Activated CD4-positive, alpha-beta memory T cell treated with anti-CD3 and anti-CD28 coated beads for 36 hours (primary cell): ENCODE measurements at regions of chrX and their contacts with region 1.

Region 1: GRCh38 chrX:14029425-14030173 is at the start of gene GEMIN8:
- DNase-seq: peak; percentile 90
- H3K4me3 Mint-ChIP-seq: peak within 1 kb of the TSS; percentile 94
- H3K27ac Mint-ChIP-seq: peak within 1 kb of the TSS; percentile 94
- H3K4me1 Mint-ChIP-seq: peaks cover 25% of the 10 kb centered on the region
- H3K27me3 Mint-ChIP-seq: no peaks in the 10 kb centered on the region
- total RNA-seq, gene GEMIN8: 8.5 to 10.6 TPM

Region 2: DNA sequence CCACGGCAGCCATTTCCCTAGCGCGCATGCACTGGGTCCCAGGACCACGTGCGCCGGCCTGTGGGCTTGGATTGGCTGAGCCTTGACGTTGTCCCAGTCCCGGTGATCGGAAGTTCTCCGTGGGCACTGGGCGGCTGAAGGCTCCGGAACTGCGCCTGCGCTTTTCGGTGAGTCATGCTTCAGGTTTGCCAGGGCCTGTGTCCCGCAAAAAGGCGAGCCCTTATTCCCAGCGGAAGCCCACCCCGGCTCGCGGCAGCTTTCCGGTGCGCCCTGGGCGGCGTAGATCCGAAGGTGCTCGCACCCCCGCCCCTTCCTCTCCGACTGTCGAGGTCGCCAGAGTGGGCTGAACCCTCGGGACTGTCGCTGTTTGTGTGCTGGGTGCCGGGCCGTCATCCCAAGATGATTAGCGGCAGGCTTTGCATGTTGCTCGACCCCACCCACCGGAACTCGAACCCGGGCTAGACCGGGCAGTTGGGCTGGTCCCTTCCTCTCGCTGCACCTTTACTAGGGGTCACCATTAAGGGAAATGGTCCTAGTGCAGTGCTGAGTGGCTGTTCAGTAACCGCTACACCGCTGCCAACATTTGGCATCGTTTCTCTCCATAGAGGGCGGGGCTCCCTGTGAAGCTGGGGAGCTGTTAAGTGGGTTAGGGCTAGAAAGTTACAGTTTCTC is 376.4 kb before region 1 on chrX and contains the start of gene TCEANC:
- CTCF ChIA-PET with region 1: interaction called, 6 read pairs
- POLR2A ChIA-PET with region 1: no interaction called
- intact Hi-C with region 1: loop called (anchors 1 kb)
- DNase-seq: peak; percentile 96
- H3K4me3 Mint-ChIP-seq: peak within 1 kb of the TSS; percentile 84
- H3K27ac Mint-ChIP-seq: peak within 1 kb of the TSS; percentile 93
- H3K4me1 Mint-ChIP-seq: peaks cover 22% of the 10 kb centered on the region
- H3K27me3 Mint-ChIP-seq: no peaks in the 10 kb centered on the region
- total RNA-seq, gene TCEANC: 1.9 TPM

Region 3: GRCh38 chrX:13700380-13700779 is 329.2 kb before region 1 on chrX:
- CTCF ChIA-PET with region 1: no interaction called
- POLR2A ChIA-PET with region 1: no interaction called
- intact Hi-C with region 1: no loop called
- DNase-seq: no peak
- H3K4me3 Mint-ChIP-seq: no peak overlapping the region
- H3K27ac Mint-ChIP-seq: no peak overlapping the region
- H3K4me1 Mint-ChIP-seq: peaks cover 53% of the 10 kb centered on the region
- H3K27me3 Mint-ChIP-seq: no peaks in the 10 kb centered on the region

Region 4: GRCh38 chrX:13742397-13743176 is 287.0 kb before region 1 on chrX:
- CTCF ChIA-PET with region 1: interaction called, 6 read pairs
- POLR2A ChIA-PET with region 1: no interaction called
- intact Hi-C with region 1: loop called (anchors 1 kb)
- DNase-seq: peak; percentile 71
- H3K4me3 Mint-ChIP-seq: peak overlapping the region; percentile 60
- H3K27ac Mint-ChIP-seq: peak overlapping the region; percentile 80
- H3K4me1 Mint-ChIP-seq: peaks cover 20% of the 10 kb centered on the region
- H3K27me3 Mint-ChIP-seq: no peaks in the 10 kb centered on the region

Region 5: DNA sequence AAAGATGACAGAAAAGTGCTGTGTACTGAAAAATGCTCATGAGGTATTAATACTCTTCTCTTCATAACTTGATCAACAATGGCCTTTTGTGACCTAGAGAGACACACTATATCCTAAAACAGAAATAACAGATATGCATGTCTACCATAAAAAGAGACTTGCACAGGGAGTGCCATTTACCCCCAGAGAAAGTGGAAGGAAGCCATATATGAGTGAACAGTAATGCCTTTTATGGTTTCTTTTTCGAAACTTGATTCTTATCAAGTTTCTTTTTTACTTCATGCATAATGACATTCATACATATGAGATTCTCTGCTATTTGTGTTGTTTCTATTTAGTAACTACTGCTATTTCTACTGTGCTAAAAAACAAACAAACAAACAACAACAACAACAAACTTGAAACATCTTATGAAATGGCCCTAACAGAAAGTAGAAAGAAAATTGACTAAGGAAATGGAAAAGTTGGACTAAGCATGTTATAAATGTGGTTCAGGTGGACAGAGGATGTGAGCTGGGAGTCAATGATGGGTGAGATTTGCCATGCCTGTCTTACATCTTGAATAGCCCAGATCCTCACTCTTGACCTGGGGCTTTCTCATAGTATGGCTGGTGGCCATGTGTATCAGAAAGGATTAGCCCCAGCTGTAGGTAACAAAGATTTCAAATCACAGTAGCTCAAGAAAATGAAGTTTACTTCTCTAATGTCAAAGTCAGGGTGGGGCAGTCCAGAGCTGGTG is 43.7 kb before region 1 on chrX:
- CTCF ChIA-PET with region 1: no interaction called
- POLR2A ChIA-PET with region 1: no interaction called
- intact Hi-C with region 1: loop called (anchors 1 kb)
- DNase-seq: no peak
- H3K4me3 Mint-ChIP-seq: no peak overlapping the region
- H3K27ac Mint-ChIP-seq: no peak overlapping the region
- H3K4me1 Mint-ChIP-seq: peaks cover 4% of the 10 kb centered on the region
- H3K27me3 Mint-ChIP-seq: no peaks in the 10 kb centered on the region

Region 6: DNA sequence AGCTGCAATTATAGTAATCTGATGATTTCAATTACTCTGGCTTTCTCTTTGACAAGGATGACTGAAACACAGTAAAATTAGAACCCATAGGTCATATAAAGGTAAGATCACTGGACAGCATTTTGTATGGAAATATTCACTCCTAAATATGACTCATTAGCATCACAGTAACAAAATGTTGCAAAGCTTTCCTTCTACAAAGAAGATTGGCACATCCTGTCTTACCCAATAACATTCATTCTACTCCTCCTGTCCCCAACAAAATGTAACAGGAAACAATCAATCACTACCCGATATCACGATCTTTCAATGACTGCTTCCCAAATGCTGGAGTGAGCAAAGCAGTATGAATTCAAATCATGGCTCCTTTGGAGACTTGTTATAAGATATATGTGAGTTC is 747.9 kb after region 1 on chrX:
- CTCF ChIA-PET with region 1: no interaction called
- POLR2A ChIA-PET with region 1: no interaction called
- intact Hi-C with region 1: no loop called
- DNase-seq: no peak
- H3K4me3 Mint-ChIP-seq: no peak overlapping the region
- H3K27ac Mint-ChIP-seq: no peak overlapping the region
- H3K4me1 Mint-ChIP-seq: no peaks in the 10 kb centered on the region
- H3K27me3 Mint-ChIP-seq: no peaks in the 10 kb centered on the region

Region 7: DNA sequence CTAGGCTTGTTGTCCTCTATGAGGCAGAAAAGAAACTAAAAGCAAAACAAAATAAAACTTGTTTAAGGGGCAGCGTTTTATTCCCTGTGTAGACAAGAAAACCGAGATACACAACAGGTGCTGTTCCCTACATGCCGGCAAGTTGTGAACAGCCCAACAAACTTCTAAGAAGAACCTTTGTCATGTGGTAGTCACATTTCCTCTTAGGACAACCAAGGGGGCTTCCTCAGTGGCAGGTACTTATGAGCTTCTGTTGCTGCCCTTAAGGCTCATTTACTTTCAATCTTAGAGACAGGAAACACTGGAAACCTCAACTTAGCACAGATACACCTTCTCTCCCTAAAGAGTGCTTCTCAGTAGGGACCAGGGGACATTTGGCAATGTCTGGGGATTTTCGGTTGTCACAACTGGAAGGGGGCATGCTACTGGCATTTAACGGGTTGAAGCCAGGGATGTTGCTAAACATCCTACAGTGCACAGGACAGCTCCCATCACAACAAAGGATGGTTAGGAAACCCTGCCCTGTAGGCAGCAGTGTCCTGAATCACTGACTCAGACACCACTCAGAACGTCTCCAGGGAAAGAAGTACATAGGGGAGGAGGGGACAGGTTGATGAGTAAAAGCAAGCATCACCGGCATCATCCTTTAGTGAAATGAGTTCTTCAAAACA is 1129.3 kb after region 1 on chrX:
- CTCF ChIA-PET with region 1: no interaction called
- POLR2A ChIA-PET with region 1: no interaction called
- intact Hi-C with region 1: loop called (anchors 2 kb)
- DNase-seq: peak; percentile 51
- H3K4me3 Mint-ChIP-seq: peak overlapping the region; percentile 57
- H3K27ac Mint-ChIP-seq: peak overlapping the region; percentile 70
- H3K4me1 Mint-ChIP-seq: peaks cover 34% of the 10 kb centered on the region
- H3K27me3 Mint-ChIP-seq: peaks cover 2% of the 10 kb centered on the region